HCT116 (cell line): ENCODE measurements at regions of chr9 and their contacts with region 1.

Region 1: DNA sequence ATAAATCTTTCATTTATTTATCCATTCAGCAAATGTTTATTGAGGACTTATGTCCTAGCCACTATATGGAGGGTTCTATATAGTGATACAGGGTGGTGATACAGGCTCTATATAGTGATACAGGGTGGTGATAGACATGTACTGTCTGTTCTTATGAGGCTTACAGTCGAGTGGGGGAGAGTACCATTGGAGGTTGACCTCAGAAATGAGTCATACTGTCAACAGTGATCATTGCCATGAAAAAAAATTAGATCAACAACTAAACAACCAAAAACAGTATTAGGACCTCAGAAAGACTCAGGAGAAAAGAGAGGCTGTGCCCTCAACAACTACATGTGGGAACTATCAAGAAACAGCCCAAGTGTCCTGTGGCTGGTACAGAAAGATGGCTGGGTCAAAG is 22.0 kb downstream of the PAPPA start:
- DNase-seq: no peak
- ATAC-seq: no peak
- H3K4me3 ChIP-seq: no peak overlapping the region
- H3K27ac ChIP-seq: no peak overlapping the region
- H3K4me1 ChIP-seq: no peaks in the 10 kb centered on the region
- H3K27me3 ChIP-seq: peaks cover 47% of the 10 kb centered on the region
- CTCF ChIP-seq: no peak
- POLR2A ChIP-seq: no peak
- RAD21 ChIP-seq: no peak

Region 2: DNA sequence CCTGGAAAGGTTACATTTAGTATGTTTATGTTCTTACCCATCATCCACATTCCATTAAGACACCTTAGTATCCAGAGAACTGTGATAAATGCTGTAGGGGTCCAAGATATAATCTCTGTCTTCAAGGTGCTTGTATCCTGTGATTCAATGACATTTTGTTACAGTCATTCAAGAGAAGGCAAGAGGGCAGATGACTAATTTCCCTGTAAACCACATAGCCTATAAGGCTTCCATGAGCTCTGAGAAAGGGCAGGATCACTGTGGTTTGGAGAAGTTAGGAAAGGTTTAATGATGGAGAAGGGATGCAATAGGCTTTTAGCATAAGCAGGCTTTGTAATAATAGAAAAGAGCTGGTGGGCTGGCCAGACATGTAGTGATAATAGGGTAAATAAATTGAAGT is 18.0 kb after region 1 on chr9:
- CTCF ChIA-PET with region 1: no interaction called
- POLR2A ChIA-PET with region 1: no interaction called
- RAD21 ChIA-PET with region 1: interaction called in 1 of 2 experiments, 6 read pairs
- intact Hi-C with region 1: loop called (anchors 2 kb)
- DNase-seq: no peak
- ATAC-seq: no peak
- H3K4me3 ChIP-seq: no peak overlapping the region
- H3K27ac ChIP-seq: no peak overlapping the region
- H3K4me1 ChIP-seq: no peaks in the 10 kb centered on the region
- H3K27me3 ChIP-seq: peaks cover 56% of the 10 kb centered on the region; the same call in 1 of the 2 replicates
- CTCF ChIP-seq: no peak
- POLR2A ChIP-seq: no peak
- RAD21 ChIP-seq: no peak